ENCODE measurements at regions of chr16 and their contacts with region 1.

Region 1: DNA sequence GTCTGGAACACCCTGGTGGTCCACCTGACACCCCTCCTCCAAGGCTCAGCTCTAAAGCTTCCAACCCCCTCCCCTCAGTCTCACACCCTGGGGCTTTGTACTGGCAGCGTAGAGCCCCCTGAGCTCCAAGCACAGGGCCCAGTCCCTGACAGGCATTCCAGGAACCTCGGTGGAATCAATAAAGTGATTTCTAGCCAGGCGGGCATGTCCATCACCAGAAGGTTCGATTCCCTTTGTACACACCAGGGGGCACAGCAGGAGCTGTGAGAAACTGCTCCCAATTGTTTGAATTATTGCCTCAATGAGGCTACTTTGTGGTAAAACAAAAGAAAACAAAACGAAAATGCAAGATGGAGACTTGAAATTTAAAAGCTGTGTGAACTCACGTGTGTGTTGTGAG is 51.8 kb downstream of the SMPD3 start:
- DNase-seq: peak; percentile 26
- H3K4me3 ChIP-seq: no peak overlapping the region
- H3K27ac ChIP-seq: no peak overlapping the region
- H3K4me1 ChIP-seq: no peaks in the 10 kb centered on the region
- H3K27me3 ChIP-seq: no peaks in the 10 kb centered on the region
- CTCF ChIP-seq: peak; percentile 59 to 71

Region 2: GRCh38 chr16:68005786-68006286 is 390.6 kb before region 1 on chr16:
- CTCF ChIA-PET with region 1: no interaction called
- dilution Hi-C with region 1: no loop called
- in situ Hi-C with region 1: no loop called
- intact Hi-C with region 1: no loop called
- DNase-seq: peak; percentile 69
- H3K4me3 ChIP-seq: no peak overlapping the region
- H3K27ac ChIP-seq: no peak overlapping the region
- H3K4me1 ChIP-seq: peaks cover 7% of the 10 kb centered on the region
- H3K27me3 ChIP-seq: no peaks in the 10 kb centered on the region
- CTCF ChIP-seq: no peak

Region 3: DNA sequence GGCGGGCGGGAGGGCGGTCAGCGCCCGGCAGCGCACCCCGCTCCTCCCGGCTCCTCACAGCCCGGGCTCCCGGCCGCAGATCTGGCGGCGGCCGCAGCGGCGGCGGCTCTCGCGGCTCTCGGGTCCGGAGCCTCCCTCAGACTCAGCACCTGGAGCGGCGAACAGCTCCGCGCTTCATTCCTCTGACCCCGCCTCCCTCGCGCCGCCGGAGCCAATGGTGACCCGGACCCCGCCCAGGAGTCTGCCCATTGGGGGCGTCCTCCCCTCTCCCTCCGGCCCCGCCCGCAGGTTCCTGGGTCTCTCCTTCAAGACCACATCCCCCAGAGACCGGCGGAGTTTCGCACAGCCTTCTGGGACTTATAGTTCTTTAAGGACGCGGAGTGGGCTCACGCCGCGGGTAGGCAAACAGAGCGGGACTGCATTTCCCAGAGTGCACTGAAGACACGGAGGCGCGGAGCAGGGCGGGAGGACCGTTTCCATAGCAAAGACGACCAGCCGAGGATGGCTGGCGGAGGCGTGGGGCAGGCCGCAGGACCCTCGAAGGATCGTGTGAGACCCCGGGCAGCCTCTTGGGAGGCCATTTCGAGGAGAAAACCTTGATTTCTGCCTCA is 52.0 kb after region 1 on chr16 and contains the start of gene SMPD3:
- CTCF ChIA-PET with region 1: no interaction called
- dilution Hi-C with region 1: no loop called
- in situ Hi-C with region 1: no loop called
- intact Hi-C with region 1: loop called (anchors 1 kb)
- DNase-seq: peak; percentile 98
- H3K4me3 ChIP-seq: peak within 1 kb of the TSS; percentile 36 to 51 (median 43)
- H3K27ac ChIP-seq: no peak within 1 kb of the TSS
- H3K4me1 ChIP-seq: peaks cover 7% of the 10 kb centered on the region
- H3K27me3 ChIP-seq: peaks cover 11% of the 10 kb centered on the region
- CTCF ChIP-seq: no peak
- total RNA-seq, gene SMPD3: not detected

Region 4: DNA sequence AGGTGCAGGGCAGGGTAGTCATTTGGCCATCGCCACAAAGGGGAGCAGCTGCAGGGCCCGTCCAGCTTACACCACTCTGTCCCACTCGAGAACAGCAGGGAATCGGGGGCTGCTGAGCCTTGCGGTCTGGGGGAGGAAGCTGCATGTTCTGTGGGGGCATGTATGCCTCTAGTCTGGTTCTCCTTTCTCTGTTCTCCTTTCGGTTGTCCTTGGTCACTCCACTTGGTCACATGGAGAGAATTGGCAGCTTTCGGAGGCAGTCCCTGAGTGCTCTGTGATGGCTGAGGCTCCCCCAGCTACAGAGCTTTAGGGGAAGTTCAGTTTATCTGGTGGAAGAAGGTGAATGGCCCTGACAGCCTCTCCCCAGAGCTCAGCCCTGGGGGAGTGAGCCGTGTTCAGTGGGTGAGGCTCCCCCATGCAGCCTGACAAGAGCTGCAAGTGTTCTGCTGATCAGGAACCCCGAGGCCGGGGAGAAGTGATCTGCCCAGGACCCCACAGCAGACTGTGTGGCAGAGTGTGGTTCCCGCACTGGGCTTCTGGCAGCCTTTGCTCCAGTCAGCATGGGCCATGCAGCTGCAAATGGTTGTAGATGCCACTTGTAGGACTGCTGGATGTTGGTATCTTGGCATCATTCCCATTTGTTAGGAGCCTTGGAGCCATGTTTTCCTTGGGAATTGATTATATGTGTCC is 74.1 kb after region 1 on chr16:
- CTCF ChIA-PET with region 1: no interaction called
- dilution Hi-C with region 1: loop called (anchors 5 kb)
- in situ Hi-C with region 1: no loop called
- intact Hi-C with region 1: no loop called
- DNase-seq: no peak
- H3K4me3 ChIP-seq: no peak overlapping the region
- H3K27ac ChIP-seq: no peak overlapping the region
- H3K4me1 ChIP-seq: peaks cover 6% of the 10 kb centered on the region
- H3K27me3 ChIP-seq: peaks cover 5% of the 10 kb centered on the region
- CTCF ChIP-seq: no peak

Region 5: GRCh38 chr16:68512183-68512582 is 115.7 kb after region 1 on chr16:
- CTCF ChIA-PET with region 1: no interaction called
- dilution Hi-C with region 1: no loop called
- in situ Hi-C with region 1: loop called in 1 of 2 experiments (anchors 25 kb)
- intact Hi-C with region 1: loop called (anchors 1 kb)
- DNase-seq: no peak
- H3K4me3 ChIP-seq: no peak overlapping the region
- H3K27ac ChIP-seq: no peak overlapping the region
- H3K4me1 ChIP-seq: peaks cover 4% of the 10 kb centered on the region
- H3K27me3 ChIP-seq: peaks cover 3% of the 10 kb centered on the region
- CTCF ChIP-seq: no peak